Activated CD4-positive, alpha-beta memory T cell treated with anti-CD3 and anti-CD28 coated beads, Interleukin-2, amount 10 ng/mL, durations not matched to agents 7 days and 5 days (primary cell): ENCODE measurements at regions of chr6 and their contacts with region 1.

Region 1: DNA sequence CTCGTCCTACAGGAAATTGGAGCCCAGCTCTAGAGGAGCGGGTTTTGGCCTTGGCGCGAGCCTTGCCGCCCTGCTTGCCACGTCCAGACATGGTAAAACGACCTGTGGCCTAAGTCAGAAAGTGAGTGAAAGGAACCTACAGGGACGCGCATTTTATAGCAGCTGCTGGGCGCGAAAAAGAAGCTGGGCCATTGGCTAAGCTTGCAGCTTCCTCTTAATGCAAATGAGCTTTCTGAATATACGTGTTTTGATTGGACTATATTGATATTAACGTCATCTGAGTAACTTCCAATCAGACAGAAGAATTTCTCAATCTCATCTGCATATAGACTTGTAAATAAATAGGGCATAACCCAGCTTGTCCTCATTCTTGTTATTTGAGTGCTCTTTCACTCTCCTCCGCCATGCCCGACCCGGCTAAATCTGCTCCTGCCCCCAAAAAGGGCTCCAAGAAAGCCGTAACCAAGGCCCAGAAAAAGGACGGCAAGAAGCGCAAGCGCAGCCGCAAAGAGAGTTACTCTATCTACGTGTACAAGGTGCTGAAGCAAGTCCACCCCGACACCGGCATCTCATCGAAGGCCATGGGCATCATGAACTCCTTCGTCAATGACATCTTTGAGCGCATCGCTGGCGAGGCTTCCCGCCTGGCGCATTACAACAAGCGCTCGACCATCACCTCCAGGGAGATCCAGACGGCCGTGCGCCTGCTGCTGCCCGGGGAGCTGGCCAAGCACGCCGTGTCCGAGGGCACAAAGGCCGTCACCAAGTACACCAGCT is 18.9 kb downstream of the OR2B2 start:
- DNase-seq: peak; percentile 95
- H3K4me3 Mint-ChIP-seq: no peak overlapping the region
- H3K27ac Mint-ChIP-seq: no peak overlapping the region
- H3K4me1 Mint-ChIP-seq: peaks cover 54% of the 10 kb centered on the region
- H3K27me3 Mint-ChIP-seq: no peaks in the 10 kb centered on the region

Region 2: DNA sequence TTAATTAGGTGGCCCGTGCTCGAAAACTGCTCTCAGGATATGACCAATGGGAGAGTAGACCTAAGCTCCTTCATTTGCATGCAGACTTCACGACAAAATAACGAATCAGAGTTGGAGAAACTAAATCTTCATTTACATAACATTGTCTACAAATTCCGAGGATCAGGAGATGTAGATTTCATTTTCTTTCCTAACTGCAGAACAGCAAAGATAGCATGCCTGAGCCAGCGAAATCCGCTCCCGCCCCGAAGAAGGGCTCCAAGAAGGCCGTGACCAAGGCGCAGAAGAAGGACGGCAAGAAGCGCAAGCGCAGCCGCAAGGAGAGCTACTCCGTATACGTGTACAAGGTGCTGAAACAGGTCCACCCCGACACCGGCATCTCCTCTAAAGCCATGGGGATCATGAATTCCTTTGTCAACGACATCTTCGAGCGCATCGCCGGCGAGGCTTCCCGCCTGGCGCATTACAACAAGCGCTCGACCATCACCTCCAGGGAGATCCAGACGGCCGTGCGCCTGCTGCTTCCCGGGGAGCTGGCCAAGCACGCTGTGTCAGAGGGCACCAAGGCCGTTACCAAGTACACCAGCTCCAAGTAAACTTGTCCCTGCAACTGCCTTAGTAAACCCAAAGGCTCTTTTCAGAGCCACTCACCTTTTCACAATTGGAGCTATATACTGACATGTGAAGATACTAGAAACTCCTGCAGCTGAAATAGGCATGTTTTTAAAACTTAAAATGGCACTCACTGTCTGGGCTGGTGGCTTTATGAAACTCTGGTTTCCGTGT is 1709.5 kb before region 1 on chr6:
- CTCF ChIA-PET with region 1: no interaction called
- POLR2A ChIA-PET with region 1: interaction called, 10 read pairs
- DNase-seq: peak; percentile 78
- H3K4me3 Mint-ChIP-seq: peak overlapping the region; percentile 75
- H3K27ac Mint-ChIP-seq: peak overlapping the region; percentile 92
- H3K4me1 Mint-ChIP-seq: peaks cover 71% of the 10 kb centered on the region
- H3K27me3 Mint-ChIP-seq: no peaks in the 10 kb centered on the region

Region 3: GRCh38 chr6:26285143-26286134 is 1607.8 kb before region 1 on chr6:
- CTCF ChIA-PET with region 1: no interaction called
- POLR2A ChIA-PET with region 1: interaction called, 18 read pairs
- DNase-seq: peak; percentile 98
- H3K4me3 Mint-ChIP-seq: peak overlapping the region; percentile 83
- H3K27ac Mint-ChIP-seq: peak overlapping the region; percentile 96
- H3K4me1 Mint-ChIP-seq: peaks cover 39% of the 10 kb centered on the region
- H3K27me3 Mint-ChIP-seq: peaks cover 4% of the 10 kb centered on the region

Region 4: DNA sequence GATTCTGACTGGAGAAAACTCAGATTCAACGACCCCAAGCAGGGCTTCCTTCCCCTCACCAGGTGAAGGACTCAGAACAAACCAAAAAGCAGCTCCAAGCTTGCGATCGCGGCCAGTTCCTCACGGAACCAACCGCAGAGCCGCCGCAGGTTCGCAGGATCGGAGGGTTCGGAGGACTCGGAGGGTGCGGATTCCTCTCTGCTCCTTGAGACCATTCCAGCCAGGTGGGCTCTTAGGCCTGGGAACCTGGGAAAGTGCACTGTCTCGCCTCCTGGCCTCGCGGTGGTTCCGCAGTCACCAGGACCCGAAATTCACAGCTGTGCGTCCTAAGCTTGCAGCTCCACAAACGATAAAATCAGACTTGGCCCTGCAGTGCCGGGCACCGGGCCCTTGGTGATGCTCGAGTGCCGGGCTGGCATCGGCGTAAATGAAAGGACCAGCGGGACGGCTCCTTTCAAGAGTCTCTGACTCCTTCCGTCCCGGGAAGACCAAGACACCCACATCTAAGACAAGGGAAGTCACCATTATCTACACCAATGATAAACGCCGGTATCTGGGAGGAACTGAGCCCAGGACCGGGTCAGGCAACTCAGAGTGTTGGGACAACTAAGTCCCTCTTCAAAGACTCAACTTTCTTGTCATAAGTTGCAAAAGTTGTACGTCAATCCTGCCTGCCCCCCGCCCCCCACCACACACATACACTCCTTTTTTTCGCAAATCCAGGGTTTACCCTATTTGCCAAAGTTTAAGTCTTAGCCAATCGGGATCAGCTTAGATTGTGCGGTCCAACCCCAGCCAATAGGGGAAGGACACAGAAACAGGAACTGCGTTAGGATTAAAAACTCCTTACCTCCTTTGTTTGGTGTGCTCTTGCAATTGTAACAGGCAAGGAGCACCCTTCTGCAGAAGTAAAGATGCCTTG is 715.5 kb before region 1 on chr6:
- CTCF ChIA-PET with region 1: interaction called, 8 read pairs
- POLR2A ChIA-PET with region 1: interaction called, 15 read pairs
- DNase-seq: peak; percentile 80
- H3K4me3 Mint-ChIP-seq: peak overlapping the region; percentile 92
- H3K27ac Mint-ChIP-seq: peak overlapping the region; percentile 88
- H3K4me1 Mint-ChIP-seq: peaks cover 20% of the 10 kb centered on the region
- H3K27me3 Mint-ChIP-seq: peaks cover 21% of the 10 kb centered on the region

Region 5: DNA sequence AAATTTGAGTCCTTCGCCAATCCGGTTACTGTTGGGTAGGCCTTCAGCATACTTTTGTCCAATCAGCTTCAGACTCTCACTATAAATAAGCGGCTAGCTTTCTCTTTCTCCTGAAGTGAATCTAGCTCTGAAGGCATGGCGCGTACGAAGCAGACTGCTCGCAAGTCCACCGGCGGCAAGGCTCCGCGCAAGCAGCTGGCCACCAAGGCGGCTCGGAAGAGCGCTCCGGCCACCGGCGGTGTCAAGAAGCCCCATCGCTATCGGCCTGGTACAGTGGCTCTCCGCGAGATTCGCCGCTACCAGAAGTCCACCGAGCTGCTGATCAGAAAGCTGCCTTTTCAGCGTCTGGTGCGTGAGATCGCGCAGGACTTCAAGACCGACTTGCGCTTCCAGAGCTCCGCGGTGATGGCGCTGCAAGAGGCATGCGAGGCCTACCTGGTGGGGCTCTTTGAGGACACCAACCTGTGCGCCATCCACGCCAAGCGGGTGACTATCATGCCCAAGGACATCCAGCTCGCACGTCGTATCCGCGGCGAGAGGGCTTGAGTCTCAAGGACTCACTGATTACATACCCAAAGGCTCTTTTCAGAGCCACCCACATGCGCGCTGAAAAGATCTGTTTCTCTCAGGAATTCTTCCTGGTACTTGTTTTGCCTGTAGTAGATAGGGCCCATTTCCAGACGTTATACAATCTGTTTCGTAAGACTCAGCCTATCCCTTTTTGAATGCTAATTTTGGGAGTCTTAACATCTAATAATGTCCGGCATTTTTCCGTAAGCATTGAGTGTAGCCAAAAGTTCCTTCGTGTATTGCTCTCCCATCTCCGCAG is 83.1 kb before region 1 on chr6:
- CTCF ChIA-PET with region 1: interaction called, 86 read pairs
- POLR2A ChIA-PET with region 1: interaction called, 809 read pairs
- DNase-seq: peak; percentile 83
- H3K4me3 Mint-ChIP-seq: peak overlapping the region; percentile 85
- H3K27ac Mint-ChIP-seq: peak overlapping the region; percentile 99
- H3K4me1 Mint-ChIP-seq: peaks cover 62% of the 10 kb centered on the region
- H3K27me3 Mint-ChIP-seq: no peaks in the 10 kb centered on the region

Region 6: GRCh38 chr6:28124102-28124970 is 231.1 kb after region 1 on chr6 and contains the start of gene ZSCAN16:
- CTCF ChIA-PET with region 1: no interaction called
- POLR2A ChIA-PET with region 1: interaction called, 12 read pairs
- DNase-seq: peak; percentile 77
- H3K4me3 Mint-ChIP-seq: peak within 1 kb of the TSS; percentile 89
- H3K27ac Mint-ChIP-seq: peak within 1 kb of the TSS; percentile 78
- H3K4me1 Mint-ChIP-seq: peaks cover 45% of the 10 kb centered on the region
- H3K27me3 Mint-ChIP-seq: no peaks in the 10 kb centered on the region
- total RNA-seq, gene ZSCAN16: 5.3 TPM